ENCODE measurements at regions of chr3 and their contacts with region 1.

Region 1: GRCh38 chr3:42739401-42740158 is 33.5 kb downstream of the CCDC13 start:
- DNase-seq: peak; percentile 98 to 100
- ATAC-seq: peak; percentile 85 to 87
- H3K4me3 ChIP-seq: no peak overlapping the region
- H3K27ac ChIP-seq: peak overlapping the region; percentile 85 to 99 (median 94)
- H3K4me1 ChIP-seq: peaks cover 22 to 42% of the 10 kb centered on the region in 2 donors
- H3K27me3 ChIP-seq: no peaks in the 10 kb centered on the region
- CTCF ChIP-seq: peak in 1 of 5 experiments; percentile 42
- POLR2A ChIP-seq: peak; percentile 64 to 72

Region 2: DNA sequence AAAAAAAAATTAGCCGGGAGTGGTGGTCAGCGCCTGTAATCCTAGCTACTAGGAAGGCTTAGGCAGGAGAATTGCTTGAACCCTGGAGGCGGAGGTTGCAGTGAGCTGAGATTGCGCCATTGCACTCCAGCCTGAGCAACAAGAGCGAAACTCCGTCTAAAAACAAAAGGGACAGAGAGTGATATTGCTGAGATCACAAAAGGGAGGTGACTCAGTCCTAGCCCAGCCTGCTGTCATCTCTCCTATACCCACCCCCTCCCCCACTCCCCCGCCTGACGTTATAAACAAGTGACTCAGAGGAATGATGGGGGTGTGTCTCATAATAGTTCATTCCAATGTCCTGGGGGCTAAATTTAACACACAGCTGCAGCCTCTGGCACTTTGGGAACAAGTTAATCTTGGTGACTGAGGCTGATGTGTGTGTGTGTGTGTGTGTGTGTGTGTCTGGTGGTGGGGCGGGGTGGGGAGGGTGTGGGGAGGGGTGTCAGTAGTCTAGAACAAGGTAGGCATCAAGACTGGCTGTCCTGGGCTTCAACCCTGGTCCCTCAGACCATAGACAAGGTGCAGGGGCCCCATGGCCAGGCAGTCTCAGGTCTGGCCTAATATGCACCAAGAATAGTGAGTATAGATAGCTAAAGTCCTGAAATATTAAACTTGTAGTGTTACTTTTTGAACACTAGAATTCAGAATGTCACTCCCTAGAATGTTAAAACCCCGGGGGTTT is 55.5 kb before region 1 on chr3:
- in situ Hi-C with region 1: no loop called
- intact Hi-C with region 1: loop called (anchors 1 kb)
- DNase-seq: peak; percentile 93 to 97
- ATAC-seq: peak; percentile 74 to 78
- H3K4me3 ChIP-seq: peak overlapping the region in 3 of 4 donors; percentile 12 to 28 (median 26)
- H3K27ac ChIP-seq: peak overlapping the region; percentile 94 to 100 (median 99)
- H3K4me1 ChIP-seq: peaks cover 31 to 49% of the 10 kb centered on the region in 2 donors
- H3K27me3 ChIP-seq: no peaks in the 10 kb centered on the region
- CTCF ChIP-seq: no peak
- POLR2A ChIP-seq: peak; percentile 25 to 32